Endothelial cell of umbilical vein (primary cell): ENCODE measurements at regions of chr1 and their contacts with region 1.

Region 1: DNA sequence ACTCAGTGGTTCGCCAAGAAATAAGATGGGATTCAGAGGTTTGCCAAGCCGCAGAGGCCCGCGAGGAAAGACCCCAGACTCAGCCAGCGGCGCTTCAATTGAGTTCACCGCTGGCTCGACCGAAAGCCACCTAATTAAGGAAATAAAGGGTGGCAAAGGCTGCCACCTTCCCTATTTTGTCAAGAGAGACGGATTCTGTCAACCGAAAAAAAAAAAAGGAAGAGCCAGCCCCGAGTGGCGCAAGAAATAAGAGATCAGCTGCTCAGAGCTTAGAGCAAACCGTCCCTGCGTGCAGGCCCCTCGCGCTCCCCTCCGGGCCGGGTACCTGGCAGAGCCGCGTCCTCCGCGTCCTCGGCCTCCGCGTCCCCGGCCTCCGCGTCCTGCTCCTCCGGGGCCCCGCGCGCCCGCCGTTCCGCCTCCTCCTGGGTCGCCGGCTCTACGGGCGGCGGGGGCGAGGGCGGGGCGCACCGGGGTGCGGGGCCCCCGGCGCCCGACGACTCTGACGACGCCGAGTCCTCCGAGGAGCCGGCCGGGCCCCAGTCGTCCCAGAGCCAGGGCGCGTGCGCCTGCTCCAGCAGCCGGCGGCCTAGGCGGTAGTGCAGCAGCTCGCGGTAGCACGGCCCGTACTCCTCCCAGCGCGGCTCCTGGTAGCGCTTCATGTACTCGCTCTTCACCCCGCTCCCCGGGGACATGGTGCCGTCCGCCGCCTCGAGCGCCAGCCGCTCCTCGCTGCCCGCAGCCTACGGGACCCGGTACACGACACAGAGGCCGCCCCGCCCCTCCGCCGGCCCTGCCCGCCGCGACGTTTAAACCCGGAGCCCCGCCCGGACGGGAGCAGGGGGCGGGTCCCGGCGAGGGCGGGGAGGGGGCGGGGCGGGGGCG is 832 bp downstream of the CCSAP start:
- DNase-seq: peak; percentile 75
- H3K4me3 ChIP-seq: peak overlapping the region; percentile 53 to 89 (median 80)
- H3K27ac ChIP-seq: no peak overlapping the region
- H3K4me1 ChIP-seq: peaks cover 11% of the 10 kb centered on the region
- H3K27me3 ChIP-seq: no peaks in the 10 kb centered on the region
- CTCF ChIP-seq: no peak
- POLR2A ChIP-seq: peak; percentile 18

Region 2: DNA sequence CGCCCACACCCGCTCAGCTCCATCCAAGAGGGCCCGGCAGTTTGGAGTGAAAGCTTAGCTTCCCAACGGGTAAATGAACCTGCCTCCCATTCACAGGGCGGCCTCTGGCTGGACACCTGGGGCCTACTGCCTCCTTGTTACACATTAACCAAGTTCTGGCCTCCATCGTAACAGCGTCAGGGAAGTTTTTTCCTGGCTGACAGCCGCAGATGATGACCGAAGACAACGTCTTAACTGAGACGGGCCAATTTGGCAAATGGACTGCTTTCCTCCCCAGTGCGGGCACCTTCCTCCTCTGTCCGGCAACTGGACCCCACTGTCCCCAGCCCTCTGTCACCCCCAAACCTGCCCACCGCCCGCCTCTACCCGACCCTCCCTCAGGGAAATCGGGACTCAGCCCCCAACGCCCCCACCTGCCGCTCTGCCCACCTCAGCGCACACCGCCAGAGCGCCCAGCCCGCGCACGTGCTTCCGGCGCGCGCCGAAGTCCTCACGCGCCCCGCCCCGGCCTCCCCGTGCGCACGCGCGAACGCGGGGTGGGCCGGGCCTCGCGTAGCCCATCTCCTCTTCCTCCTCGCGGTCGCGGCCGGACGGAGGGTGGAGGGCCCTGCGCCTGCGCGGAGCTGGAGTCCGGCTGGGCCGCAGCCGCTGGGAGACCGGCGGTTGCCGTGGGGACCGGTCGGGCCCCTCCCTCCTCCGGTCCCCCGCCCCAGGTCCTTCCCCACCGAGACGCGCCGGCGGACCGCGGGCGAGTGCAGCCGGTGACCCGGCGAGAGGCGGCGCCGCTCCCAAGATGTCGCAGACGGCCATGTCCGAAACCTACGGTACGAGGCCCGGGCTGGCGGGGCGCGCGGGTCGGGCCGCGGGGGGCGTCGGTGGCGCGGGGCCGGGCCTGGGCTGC is 71.2 kb before region 1 on chr1 and contains the start of gene RAB4A:
- CTCF ChIA-PET with region 1: interaction called, 3 read pairs
- POLR2A ChIA-PET with region 1: no interaction called
- dilution Hi-C with region 1: no loop called
- intact Hi-C with region 1: loop called (anchors 1 kb)
- DNase-seq: peak; percentile 89
- H3K4me3 ChIP-seq: peak within 1 kb of the TSS; percentile 57 to 93 (median 85)
- H3K27ac ChIP-seq: no peak within 1 kb of the TSS
- H3K4me1 ChIP-seq: peaks cover 10% of the 10 kb centered on the region
- H3K27me3 ChIP-seq: no peaks in the 10 kb centered on the region
- CTCF ChIP-seq: no peak
- POLR2A ChIP-seq: peak; percentile 76
- total RNA-seq, gene RAB4A: 43.2 and 52.9 TPM in 2 replicates

Region 3: GRCh38 chr1:229323201-229323600 is 18.8 kb before region 1 on chr1:
- CTCF ChIA-PET with region 1: no interaction called
- POLR2A ChIA-PET with region 1: no interaction called
- dilution Hi-C with region 1: no loop called
- intact Hi-C with region 1: loop called (anchors 2 kb)
- DNase-seq: no peak
- H3K4me3 ChIP-seq: no peak overlapping the region
- H3K27ac ChIP-seq: no peak overlapping the region
- H3K4me1 ChIP-seq: no peaks in the 10 kb centered on the region
- H3K27me3 ChIP-seq: no peaks in the 10 kb centered on the region
- CTCF ChIP-seq: no peak
- POLR2A ChIP-seq: no peak

Region 4: DNA sequence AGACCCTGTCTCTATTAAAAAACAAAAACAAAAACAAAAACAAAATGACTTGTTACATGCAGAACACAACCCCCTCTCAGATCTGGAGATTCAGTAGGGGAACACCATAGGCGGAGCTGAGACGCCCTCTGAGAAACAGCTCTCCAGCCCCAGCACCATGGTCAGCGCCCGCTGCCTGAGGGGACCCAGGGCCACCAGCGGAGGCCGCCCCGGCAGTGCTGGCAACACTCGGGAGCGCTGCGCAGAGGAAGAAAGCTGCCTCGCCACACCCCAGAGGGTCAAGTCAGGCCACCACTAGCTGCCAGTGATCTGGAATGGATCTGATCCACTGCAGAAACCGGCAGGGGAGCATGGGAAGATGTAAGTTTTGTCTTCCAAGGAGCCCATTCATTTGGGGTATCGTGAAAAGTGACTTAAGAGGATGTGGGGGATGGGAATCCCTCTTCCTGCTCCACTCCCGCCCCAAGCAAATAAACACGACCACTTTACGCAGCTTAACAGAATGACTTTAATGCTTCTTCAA is 88.8 kb after region 1 on chr1:
- CTCF ChIA-PET with region 1: no interaction called
- POLR2A ChIA-PET with region 1: no interaction called
- dilution Hi-C with region 1: no loop called
- intact Hi-C with region 1: loop called (anchors 5 kb)
- DNase-seq: peak; percentile 33
- H3K4me3 ChIP-seq: no peak overlapping the region
- H3K27ac ChIP-seq: no peak overlapping the region
- H3K4me1 ChIP-seq: no peaks in the 10 kb centered on the region
- H3K27me3 ChIP-seq: peaks cover 43 to 58% of the 10 kb centered on the region in 2 experiments
- CTCF ChIP-seq: no peak
- POLR2A ChIP-seq: no peak

Region 5: DNA sequence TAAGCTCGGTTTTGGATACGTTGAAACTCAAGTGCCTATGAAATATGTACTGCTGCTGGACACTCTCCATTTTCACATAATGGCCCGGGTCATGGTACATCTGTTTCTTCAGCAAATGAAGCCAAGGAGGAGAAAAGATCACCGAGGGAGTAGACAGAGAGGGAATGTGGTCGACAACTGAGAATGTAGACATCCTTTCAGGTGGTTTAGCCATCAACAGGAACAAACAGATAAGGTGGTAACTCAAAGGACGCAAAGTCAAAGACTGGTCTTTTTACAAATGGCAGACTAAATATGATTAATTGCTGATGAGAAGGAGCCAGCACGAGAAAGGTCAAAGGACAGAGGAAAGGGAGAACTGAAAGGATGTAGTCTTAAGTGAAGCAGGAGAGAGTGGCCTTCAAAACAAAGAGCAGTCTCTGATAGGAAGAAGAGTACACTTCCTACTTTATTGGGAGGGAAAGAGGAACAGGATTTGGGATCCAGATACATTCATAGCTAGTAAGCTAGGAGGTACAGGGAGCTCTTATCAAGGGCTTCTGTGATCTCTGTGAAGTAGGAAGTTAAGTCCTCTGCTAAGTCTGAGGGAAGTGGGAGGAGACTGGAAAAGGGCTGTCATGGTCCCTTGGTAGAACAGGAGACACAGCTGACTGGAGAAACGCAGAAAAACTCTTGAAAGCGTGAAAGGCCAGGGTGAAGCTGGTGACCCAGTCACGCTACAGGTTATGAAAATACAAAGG is 137.8 kb after region 1 on chr1:
- CTCF ChIA-PET with region 1: interaction called, 10 read pairs
- POLR2A ChIA-PET with region 1: no interaction called
- dilution Hi-C with region 1: no loop called
- intact Hi-C with region 1: no loop called
- DNase-seq: no peak
- H3K4me3 ChIP-seq: no peak overlapping the region
- H3K27ac ChIP-seq: no peak overlapping the region
- H3K4me1 ChIP-seq: no peaks in the 10 kb centered on the region
- H3K27me3 ChIP-seq: no peaks in the 10 kb centered on the region
- CTCF ChIP-seq: no peak
- POLR2A ChIP-seq: no peak

Region 6: GRCh38 chr1:229507951-229508822 is 166.2 kb after region 1 on chr1 and contains the start of gene NUP133:
- CTCF ChIA-PET with region 1: no interaction called
- POLR2A ChIA-PET with region 1: no interaction called
- dilution Hi-C with region 1: no loop called
- intact Hi-C with region 1: loop called (anchors 2 kb)
- DNase-seq: peak; percentile 99
- H3K4me3 ChIP-seq: peak within 1 kb of the TSS; percentile 61 to 93 (median 64)
- H3K27ac ChIP-seq: peak within 1 kb of the TSS; percentile 56
- H3K4me1 ChIP-seq: peaks cover 14% of the 10 kb centered on the region
- H3K27me3 ChIP-seq: no peaks in the 10 kb centered on the region
- CTCF ChIP-seq: no peak
- POLR2A ChIP-seq: peak; percentile 99
- total RNA-seq, gene NUP133: 35.9 and 43.2 TPM in 2 replicates